ENCODE measurements at regions of chr7 and their contacts with region 1.

Region 1: DNA sequence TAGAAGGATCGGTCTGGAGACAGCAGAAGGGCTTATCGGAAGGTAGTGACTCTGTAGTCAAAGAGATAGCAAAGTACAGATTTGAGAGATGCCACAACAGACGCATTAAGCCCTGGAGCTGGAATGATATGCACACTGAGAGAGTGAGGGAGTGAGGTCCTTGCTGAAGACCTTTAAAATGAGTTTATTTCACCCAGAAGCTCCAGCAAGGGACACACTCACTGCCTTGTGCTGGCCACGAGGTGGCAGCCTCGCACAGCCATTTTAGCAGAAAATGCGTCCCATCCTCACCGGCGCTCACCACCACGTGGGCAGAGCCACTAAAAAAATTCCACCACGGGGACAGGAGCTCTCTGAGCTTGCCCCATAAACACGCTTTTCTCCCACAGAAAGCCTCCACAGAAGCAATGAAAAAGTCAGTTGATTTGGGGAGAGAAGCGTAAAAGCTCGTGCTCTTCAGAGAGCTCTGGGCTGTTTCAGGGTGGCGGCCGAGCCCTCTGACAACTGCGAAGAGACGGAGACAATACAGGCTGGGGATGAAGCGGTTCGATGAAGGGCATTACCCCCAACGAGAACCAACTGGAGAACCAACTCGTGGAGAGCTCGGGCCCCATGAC is 163.0 kb upstream of the KLF14 start:
- DNase-seq: peak; percentile 30 to 89 (median 70)
- ATAC-seq: peak; percentile 68 to 79 (median 76)
- H3K4me3 ChIP-seq: no peak overlapping the region
- H3K4me3 Mint-ChIP-seq: peak overlapping the region in 1 of 3 donors; percentile 48
- H3K27ac ChIP-seq: peak overlapping the region; percentile 19
- H3K27ac Mint-ChIP-seq: peak overlapping the region; percentile 78 to 89
- H3K4me1 ChIP-seq: peaks cover 3 to 61% of the 10 kb centered on the region in 2 experiments
- H3K4me1 Mint-ChIP-seq: peaks cover 70 to 92% (median 85%) of the 10 kb centered on the region in 3 donors
- H3K27me3 ChIP-seq: no peaks in the 10 kb centered on the region
- H3K27me3 Mint-ChIP-seq: no peaks in the 10 kb centered on the region

Region 2: DNA sequence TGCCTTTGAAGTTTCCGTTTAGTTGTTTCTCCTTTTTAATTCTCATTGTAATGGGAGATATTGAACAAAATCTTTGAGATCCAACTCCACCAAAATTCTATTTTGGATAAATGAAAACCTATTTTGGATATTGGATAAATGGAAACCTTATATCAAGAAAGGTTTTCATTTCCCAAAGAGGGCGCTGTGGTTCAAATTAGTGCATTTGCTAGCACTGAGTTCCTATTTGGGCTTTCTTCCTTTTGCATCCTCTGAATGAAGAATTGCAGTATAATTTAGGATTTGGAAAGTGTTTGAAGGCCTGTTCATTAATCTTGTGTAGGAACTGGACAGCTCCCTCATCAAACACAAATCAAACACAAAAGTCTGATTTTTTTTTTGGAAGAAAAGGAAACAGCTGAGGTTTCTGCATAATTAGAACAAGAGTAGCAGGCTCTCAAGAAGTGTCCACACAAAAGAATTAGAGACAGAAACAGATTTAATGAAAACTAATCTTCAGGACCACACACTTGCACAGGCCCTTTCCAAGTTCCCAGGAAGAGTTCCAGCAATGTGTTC is 82.1 kb before region 1 on chr7:
- CTCF ChIA-PET with region 1: no interaction called
- POLR2A ChIA-PET with region 1: no interaction called
- DNase-seq: peak in 1 of 35 experiments; percentile 34
- ATAC-seq: no peak
- H3K4me3 ChIP-seq: no peak overlapping the region
- H3K4me3 Mint-ChIP-seq: no peak overlapping the region
- H3K27ac ChIP-seq: no peak overlapping the region
- H3K27ac Mint-ChIP-seq: no peak overlapping the region
- H3K4me1 ChIP-seq: no peaks in the 10 kb centered on the region
- H3K4me1 Mint-ChIP-seq: no peaks in the 10 kb centered on the region
- H3K27me3 ChIP-seq: peaks cover 0 to 2% of the 10 kb centered on the region in 2 experiments
- H3K27me3 Mint-ChIP-seq: peaks cover 0 to 4% of the 10 kb centered on the region in 2 donors

Region 3: DNA sequence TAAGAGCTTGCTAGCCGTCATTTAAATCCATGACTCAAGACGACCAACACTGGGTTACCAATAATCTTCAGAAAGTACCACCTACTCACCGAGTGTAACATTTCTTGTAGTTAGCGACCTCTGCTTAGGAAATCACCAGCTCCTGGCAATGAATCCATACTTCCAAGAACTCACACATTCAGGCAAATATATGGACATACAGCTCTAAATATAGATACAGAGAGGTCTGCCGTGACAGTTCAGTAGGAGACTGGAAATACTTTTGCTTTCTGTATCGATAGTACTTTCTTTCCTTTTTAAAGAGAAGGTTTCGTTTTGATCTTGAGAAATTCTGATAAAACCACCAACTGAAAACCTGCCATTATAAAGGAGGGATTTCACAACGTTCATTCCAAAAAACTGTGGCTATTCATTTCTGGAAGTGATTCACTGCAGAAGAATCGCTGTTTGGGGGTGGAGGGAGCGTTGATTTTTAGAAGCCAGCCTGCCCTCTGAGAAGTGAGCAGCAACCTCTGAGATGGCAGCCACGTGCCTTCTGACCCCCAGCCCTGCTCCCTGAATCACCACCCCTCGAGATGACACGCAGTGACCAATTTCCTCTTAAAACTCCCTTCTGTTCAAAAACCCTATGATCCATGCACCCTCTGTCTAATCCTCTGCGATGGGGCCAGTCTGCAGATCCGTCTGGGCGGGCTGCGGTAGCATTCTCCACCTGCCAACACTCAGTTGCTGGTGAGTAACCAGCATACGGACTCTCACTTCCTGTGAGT is 16.0 kb after region 1 on chr7:
- CTCF ChIA-PET with region 1: interaction called, 11 to 13 read pairs
- POLR2A ChIA-PET with region 1: interaction called, 4 to 9 read pairs
- DNase-seq: peak; percentile 25 to 90 (median 77)
- ATAC-seq: peak; percentile 89 to 94 (median 92)
- H3K4me3 ChIP-seq: peak overlapping the region; percentile 58 to 96
- H3K4me3 Mint-ChIP-seq: peak overlapping the region; percentile 82 to 86 (median 86)
- H3K27ac ChIP-seq: peak overlapping the region; percentile 89
- H3K27ac Mint-ChIP-seq: peak overlapping the region; percentile 90
- H3K4me1 ChIP-seq: peaks cover 22 to 60% of the 10 kb centered on the region in 2 experiments
- H3K4me1 Mint-ChIP-seq: peaks cover 92 to 93% (median 93%) of the 10 kb centered on the region in 3 donors
- H3K27me3 ChIP-seq: no peaks in the 10 kb centered on the region
- H3K27me3 Mint-ChIP-seq: no peaks in the 10 kb centered on the region

Region 4: DNA sequence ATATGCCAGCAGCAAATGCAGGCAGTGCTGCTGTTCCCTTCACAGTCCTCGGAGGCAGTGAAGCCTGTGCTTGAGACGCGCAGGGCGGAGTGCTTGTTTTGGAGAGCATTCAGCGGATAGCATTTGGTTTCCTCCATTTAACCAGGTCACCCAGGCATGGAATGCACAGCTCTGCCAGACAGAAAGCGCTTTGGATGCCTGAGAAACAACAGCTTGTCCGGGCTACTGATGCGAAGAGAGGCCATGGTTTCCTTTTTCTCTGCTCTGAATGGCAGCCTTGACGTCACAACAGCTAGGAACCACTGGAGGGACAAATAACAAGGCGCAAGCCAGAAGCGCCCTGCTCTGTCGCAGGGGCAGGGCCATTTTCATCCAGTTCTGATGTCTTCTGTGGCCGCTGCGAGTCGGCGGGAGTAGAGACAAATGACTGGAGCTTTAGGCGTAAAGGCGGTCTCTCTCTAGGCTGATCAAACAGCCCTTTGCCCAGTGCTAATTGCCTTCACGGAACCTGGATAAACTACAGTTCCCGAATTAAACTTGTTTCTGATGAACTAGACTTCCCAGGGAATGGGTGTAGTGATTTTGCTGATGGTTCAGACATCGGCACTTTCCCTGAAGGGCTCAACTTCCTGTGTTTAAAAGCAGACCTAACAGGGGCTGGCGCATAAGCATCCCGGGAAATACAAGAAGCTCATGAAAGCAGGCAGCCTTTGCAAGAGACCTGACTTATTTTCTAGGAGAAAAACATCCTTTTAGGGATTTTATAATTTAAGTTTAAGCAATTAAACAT is 24.6 kb after region 1 on chr7:
- CTCF ChIA-PET with region 1: interaction called, 8 to 13 read pairs
- POLR2A ChIA-PET with region 1: interaction called in 1 of 2 experiments, 4 read pairs
- DNase-seq: no peak
- ATAC-seq: no peak
- H3K4me3 ChIP-seq: no peak overlapping the region
- H3K4me3 Mint-ChIP-seq: no peak overlapping the region
- H3K27ac ChIP-seq: no peak overlapping the region
- H3K27ac Mint-ChIP-seq: peak overlapping the region in 1 of 2 donors; percentile 61
- H3K4me1 ChIP-seq: peaks cover 4 to 45% of the 10 kb centered on the region in 2 experiments
- H3K4me1 Mint-ChIP-seq: peaks cover 78 to 96% (median 92%) of the 10 kb centered on the region in 3 donors
- H3K27me3 ChIP-seq: no peaks in the 10 kb centered on the region
- H3K27me3 Mint-ChIP-seq: no peaks in the 10 kb centered on the region

Region 5: DNA sequence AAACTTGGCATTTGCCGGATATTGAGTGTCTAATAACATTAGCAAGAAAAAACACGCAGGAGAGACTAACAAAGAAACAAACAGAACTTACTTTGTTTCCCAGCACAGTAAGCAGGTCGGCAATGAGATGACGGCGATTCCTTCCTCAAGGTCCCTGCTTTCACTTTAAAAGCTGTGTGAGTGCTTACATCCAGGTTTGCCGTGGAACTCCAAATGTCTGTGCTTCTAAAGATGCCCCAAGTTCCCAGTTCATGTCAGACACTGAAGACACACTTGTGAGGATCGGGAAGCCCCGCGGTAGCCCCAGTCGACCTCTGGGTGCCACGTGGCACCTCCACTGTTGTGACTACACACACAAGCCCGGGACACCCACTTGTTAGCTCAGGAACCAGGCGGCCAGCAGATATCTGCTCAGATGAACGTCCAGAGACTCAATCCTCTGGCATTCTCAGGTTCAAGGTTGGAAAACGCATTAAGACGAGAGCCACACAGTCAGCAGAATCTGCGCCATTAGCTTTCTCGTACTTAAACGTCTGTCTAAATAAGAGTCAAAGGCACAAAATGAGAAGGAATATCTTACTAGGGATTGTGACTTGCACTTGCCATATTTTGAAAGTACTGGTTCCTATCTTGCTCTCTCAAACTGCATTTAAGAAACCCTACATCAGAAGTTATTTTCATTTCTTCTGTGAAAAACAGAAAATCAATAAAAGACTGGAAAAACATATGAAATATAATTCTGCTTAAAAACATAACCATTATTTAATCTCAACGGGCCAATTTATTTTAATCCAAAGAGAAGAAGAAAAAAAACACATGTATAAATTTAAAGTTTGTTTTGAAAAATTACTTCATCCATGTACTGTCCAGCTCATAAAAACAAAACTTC is 44.6 kb after region 1 on chr7:
- CTCF ChIA-PET with region 1: interaction called, 9 to 19 read pairs
- POLR2A ChIA-PET with region 1: interaction called, 3 read pairs
- DNase-seq: peak in 18 of 35 experiments; percentile 24 to 67 (median 34)
- ATAC-seq: peak in 2 of 4 experiments; percentile 15 to 29
- H3K4me3 ChIP-seq: peak overlapping the region in 1 of 2 donors; percentile 53
- H3K4me3 Mint-ChIP-seq: peak overlapping the region; percentile 84 to 87 (median 84)
- H3K27ac ChIP-seq: peak overlapping the region; percentile 90
- H3K27ac Mint-ChIP-seq: peak overlapping the region; percentile 96 to 97
- H3K4me1 ChIP-seq: peaks cover 0 to 56% of the 10 kb centered on the region in 2 experiments
- H3K4me1 Mint-ChIP-seq: peaks cover 91 to 97% (median 92%) of the 10 kb centered on the region in 3 donors
- H3K27me3 ChIP-seq: no peaks in the 10 kb centered on the region
- H3K27me3 Mint-ChIP-seq: no peaks in the 10 kb centered on the region

Region 6: DNA sequence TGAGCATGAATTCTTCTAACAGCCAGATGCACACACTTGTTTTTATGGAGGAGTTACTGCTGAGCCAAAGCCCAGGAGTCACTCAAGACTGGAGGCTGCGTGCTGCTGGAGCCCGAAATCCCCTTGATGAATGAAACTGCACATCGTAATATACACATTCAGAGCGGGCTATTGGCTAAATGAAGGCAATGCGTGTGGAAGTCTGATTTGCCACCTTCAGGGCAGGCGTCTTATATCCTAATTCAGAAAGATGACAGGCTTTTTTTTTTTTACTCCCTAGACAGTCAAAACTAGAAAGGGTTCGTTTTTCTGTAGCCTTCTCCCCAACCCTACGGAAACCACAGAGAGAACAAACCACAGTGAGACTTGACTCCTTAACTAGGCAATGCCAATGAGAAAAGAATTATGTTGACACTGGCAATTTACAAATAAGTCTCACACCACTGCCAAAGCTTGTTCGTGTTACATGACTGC is 64.2 kb after region 1 on chr7:
- CTCF ChIA-PET with region 1: interaction called, 5 to 12 read pairs
- POLR2A ChIA-PET with region 1: no interaction called
- DNase-seq: peak in 33 of 35 experiments; percentile 26 to 92 (median 75)
- ATAC-seq: peak; percentile 78 to 84 (median 81)
- H3K4me3 ChIP-seq: peak overlapping the region in 1 of 2 donors; percentile 45
- H3K4me3 Mint-ChIP-seq: peak overlapping the region; percentile 79 to 90 (median 87)
- H3K27ac ChIP-seq: peak overlapping the region; percentile 97
- H3K27ac Mint-ChIP-seq: peak overlapping the region; percentile 96
- H3K4me1 ChIP-seq: peaks cover 31 to 57% of the 10 kb centered on the region in 2 experiments
- H3K4me1 Mint-ChIP-seq: peaks cover 42 to 75% (median 72%) of the 10 kb centered on the region in 3 donors
- H3K27me3 ChIP-seq: no peaks in the 10 kb centered on the region
- H3K27me3 Mint-ChIP-seq: no peaks in the 10 kb centered on the region

Region 7: GRCh38 chr7:131007394-131008330 is 110.7 kb after region 1 on chr7:
- CTCF ChIA-PET with region 1: interaction called, 6 to 12 read pairs
- POLR2A ChIA-PET with region 1: interaction called, 3 to 7 read pairs
- DNase-seq: peak in 32 of 35 experiments; percentile 32 to 80 (median 54)
- ATAC-seq: peak; percentile 51 to 55 (median 53)
- H3K4me3 ChIP-seq: peak overlapping the region in 1 of 2 donors; percentile 1
- H3K4me3 Mint-ChIP-seq: peak overlapping the region; percentile 17 to 52 (median 41)
- H3K27ac ChIP-seq: peak overlapping the region; percentile 69
- H3K27ac Mint-ChIP-seq: peak overlapping the region; percentile 92 to 95
- H3K4me1 ChIP-seq: peaks cover 6 to 42% of the 10 kb centered on the region in 2 experiments
- H3K4me1 Mint-ChIP-seq: peaks cover 86 to 95% (median 91%) of the 10 kb centered on the region in 3 donors
- H3K27me3 ChIP-seq: no peaks in the 10 kb centered on the region
- H3K27me3 Mint-ChIP-seq: no peaks in the 10 kb centered on the region

Region 8: DNA sequence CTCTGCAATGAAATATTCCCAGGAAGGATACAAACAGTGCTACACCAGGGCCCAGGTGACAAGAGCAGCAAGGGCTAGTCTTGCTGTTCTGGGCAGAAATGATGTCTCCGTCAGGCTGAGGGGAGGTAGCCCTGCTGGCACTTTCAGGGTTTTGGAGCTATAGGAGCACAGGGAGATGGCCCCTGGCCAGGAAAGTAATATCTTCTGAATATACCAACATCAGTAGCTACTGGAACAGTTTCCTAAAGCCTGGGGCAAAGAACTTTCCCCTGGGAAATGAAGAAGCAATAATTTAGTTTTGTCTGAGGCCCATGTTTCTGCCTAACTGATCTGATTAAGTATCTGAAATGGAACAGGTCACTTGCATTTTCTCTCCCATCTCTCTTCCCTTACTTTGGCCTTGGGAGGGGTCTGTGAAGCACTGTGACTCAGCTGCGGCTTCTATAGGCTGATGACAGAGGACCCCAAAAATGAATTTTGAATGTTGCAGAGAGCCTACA is 1148.5 kb after region 1 on chr7:
- CTCF ChIA-PET with region 1: no interaction called
- POLR2A ChIA-PET with region 1: no interaction called
- DNase-seq: no peak
- ATAC-seq: no peak
- H3K4me3 ChIP-seq: no peak overlapping the region
- H3K4me3 Mint-ChIP-seq: no peak overlapping the region
- H3K27ac ChIP-seq: no peak overlapping the region
- H3K27ac Mint-ChIP-seq: no peak overlapping the region
- H3K4me1 ChIP-seq: no peaks in the 10 kb centered on the region
- H3K4me1 Mint-ChIP-seq: no peaks in the 10 kb centered on the region
- H3K27me3 ChIP-seq: peaks cover 0 to 4% of the 10 kb centered on the region in 2 experiments
- H3K27me3 Mint-ChIP-seq: peaks cover 5 to 14% of the 10 kb centered on the region in 2 donors

Measured in T-cell (primary cell).